Head of caudate nucleus (tissue), 42 donors: ENCODE measurements at regions of chr9 and their contacts with region 1.

Region 1: DNA sequence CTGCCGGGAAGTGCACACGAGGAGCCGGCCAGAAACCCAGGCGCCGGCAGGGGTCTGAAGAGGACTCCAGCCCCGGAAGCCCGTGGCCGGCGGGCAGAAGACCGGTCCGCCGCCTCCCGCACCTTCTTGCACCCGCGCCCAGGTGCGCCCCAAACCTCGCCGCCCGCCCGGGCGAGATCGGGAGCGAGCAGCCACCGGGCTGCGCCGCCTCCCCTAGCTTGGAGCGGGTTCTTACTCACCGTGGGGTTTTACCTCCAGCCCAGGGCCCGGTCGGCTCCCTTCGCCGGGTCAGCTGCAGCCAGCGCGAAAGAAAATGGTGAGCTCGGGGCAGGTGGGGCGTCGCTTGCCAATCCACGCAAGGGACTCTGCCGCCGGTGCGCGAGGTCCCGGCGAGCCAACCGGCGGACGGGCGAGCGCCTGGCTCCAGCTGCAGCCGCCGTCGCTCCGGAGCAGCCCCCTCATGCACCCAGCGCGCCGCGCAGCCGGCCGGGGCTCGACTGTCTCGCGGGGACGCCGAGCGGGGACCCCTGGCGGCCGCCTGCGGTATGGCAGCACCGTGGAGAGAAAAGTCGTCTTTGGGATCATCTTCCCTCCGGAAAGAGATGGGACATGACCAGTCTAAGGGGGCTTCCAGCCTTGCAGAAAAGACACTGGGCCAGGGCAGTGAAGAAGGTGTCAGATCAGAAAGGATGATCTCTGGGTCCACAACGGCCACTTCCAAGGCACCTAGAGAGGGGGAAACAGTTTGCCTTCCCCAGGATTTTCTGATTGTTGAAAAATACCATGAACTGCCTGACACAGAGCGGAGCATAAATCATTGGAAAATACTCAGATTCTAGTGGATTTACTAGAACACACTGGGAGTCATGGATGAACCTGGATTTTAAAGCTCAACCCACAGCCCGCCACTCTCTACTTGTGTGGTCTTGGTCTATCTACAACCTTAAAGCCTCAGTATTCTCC is at the start of gene MOB3B:
- DNase-seq: peak; percentile 83 to 98 (median 94)

Region 2: DNA sequence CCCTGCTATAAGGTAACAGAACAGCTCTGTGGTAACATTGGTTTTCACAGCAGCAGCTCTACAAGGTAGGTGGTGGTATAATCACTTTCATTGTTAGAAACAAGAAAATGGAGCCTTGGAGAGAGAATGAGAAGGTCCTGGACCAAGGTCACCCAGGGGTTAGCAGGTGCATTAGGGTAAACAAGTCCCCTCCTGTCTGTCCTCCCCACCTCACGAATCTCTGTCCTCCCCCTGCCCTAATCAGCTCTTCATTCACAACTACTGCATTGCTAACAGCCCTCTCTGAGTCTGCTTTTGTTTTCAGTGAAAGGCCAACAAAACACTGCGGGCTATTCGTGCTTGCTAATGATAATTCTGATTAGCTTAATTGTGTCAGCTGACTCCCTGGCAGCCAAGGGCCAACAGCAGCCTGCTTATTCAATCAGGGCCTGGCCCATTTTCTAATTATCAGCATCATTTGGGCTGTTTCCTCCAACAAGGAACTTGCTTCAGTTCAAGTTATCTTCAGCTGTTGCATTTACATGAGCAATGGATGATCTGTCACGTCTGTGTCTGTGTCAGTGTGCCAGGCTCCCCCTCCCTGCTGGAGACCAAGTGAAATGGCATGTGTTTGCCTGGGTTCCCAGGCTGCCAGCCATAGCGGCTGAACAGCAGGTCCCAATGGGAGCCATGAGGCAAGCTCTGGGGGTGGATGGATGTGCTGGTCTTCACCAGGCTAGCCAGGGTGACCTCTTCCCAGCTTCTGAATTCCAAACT is 175.9 kb before region 1 on chr9:
- intact Hi-C with region 1: loop called (anchors 5 kb)
- DNase-seq: peak; percentile 69 to 96 (median 89)

Region 3: GRCh38 chr9:27673641-27674040 is 144.0 kb after region 1 on chr9:
- intact Hi-C with region 1: no loop called
- DNase-seq: no peak

Region 4: DNA sequence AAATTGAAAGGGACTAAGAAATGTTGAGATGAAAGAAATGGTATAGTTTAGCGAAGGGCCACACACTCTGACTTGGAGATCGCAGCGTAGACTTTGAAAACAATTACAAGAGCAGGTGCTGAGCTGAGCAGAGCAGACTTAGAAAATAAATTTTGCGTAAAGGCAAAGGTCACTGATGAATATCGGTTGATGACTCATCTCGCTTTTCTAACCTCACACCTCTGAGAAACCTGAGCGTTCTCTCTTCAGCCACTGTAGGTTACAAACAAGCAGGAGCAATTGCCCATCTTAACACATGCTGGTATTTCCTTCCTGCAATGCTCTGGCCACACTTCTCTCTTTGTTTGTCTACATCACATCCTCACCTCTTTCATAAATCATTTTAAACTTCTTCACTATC is 234.2 kb after region 1 on chr9:
- intact Hi-C with region 1: no loop called
- DNase-seq: no peak